ENCODE measurements at regions of chr9 and their contacts with region 1.

Region 1: GRCh38 chr9:123248630-123249029 is 19.8 kb downstream of the STRBP start:
- DNase-seq: no peak
- H3K4me3 Mint-ChIP-seq: no peak overlapping the region
- H3K27ac Mint-ChIP-seq: no peak overlapping the region
- H3K4me1 Mint-ChIP-seq: peaks cover 9% of the 10 kb centered on the region
- H3K27me3 Mint-ChIP-seq: no peaks in the 10 kb centered on the region

Region 2: DNA sequence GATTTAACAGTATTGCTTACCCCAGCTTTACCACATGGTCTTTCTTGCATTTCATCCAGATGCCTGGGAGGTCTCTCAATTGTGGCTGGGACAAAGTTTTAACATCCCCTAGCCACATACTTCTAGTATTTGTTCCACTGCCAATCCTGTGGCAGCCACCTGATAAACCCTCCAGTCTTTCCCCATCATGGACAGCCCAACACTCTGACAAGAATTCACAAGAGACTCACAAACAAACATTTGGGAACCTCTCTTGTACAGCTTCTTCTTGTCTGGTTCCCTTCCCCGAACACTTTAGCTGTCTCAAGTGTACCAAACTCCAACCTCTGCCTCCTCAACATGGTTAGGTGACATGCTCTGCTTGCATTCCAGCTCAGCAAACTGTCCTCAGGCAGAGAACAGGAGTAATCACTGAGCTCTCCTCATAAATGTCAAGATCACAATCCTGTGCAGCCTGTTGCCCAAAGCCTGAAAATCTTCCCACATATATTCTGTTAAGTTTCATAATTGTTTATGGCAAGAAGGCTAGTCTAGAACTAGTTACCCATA is 39.9 kb before region 1 on chr9:
- intact Hi-C with region 1: no loop called
- DNase-seq: no peak
- H3K4me3 Mint-ChIP-seq: no peak overlapping the region
- H3K27ac Mint-ChIP-seq: no peak overlapping the region
- H3K4me1 Mint-ChIP-seq: no peaks in the 10 kb centered on the region
- H3K27me3 Mint-ChIP-seq: no peaks in the 10 kb centered on the region

Region 3: DNA sequence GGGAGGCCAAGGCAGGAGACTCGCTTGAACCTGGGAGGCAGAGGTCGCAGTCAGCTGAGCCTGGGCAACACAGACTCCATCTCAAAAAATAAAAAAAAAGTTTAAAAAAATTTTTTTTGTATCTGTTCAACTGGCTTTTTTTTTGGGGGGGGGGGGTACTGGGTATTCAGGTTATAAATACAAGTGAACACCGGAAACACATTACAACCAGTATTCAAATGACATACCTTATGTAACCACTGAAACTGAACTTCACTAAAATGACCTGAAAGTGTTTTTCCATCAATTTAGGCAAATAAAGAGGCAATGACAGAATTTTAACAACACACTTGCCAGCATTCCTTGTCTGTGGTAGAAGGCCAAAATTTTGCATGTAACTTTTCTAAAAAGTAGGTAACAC is 13.8 kb before region 1 on chr9:
- intact Hi-C with region 1: loop called (anchors 2 kb)
- DNase-seq: no peak
- H3K4me3 Mint-ChIP-seq: no peak overlapping the region
- H3K27ac Mint-ChIP-seq: no peak overlapping the region
- H3K4me1 Mint-ChIP-seq: peaks cover 6% of the 10 kb centered on the region
- H3K27me3 Mint-ChIP-seq: no peaks in the 10 kb centered on the region

Measured in activated CD4-positive, alpha-beta T cell treated with anti-CD3 and anti-CD28 coated beads, Interleukin-2, amount 10 ng/mL, durations not matched to agents 24 days and 14 days (primary cell).